Heart right ventricle (tissue), 16 donors: ENCODE measurements at regions of chr12 and their contacts with region 1.

Region 1: DNA sequence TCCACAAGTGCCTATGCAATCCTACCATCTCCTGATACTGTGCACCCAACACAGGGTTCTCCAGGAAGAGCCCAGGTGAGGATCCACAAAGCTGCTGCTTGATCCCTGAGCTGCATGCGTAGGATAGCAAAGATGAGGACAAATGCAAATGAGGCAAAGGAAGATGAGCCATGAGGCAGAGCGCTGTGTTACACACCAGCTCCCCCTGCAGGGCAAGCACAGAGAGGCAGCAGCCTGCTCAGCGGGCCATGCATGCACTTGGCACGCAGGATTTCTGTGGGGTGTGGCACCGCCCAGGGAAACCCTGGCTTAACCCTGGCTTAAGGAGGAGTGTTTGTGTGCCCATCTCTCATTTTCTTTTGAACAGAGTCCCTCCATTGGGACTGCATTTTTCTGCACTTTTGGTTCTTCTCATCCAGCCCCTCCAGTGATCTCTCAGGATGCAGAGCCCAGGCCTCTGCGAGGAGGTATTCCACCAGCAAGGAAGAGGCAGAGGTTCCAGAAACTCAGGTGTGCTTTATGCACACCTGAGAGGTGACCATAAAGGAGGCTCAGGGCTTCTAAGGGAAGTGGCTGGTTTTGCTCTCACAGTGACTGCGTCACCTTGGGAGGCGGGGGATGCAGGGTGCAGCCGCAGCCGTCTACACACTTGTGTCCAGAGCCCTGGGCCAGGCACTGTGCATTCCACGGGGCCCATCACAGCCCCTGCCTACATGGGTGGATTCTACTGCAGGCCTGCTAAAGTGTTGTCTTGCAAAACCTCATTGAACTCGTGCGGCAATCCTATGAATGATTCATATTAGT is 973.3 kb upstream of the TMEM132C start:
- DNase-seq: peak in 1 of 2 donors; percentile 40
- ATAC-seq: peak in 5 of 8 donors; percentile 16 to 69 (median 50)
- H3K4me3 ChIP-seq: no peak overlapping the region
- H3K27ac ChIP-seq: no peak overlapping the region
- H3K4me1 ChIP-seq: no peaks in the 10 kb centered on the region
- H3K27me3 ChIP-seq: peaks cover 0 to 16% (median 7%) of the 10 kb centered on the region in 7 donors
- CTCF ChIP-seq: peak; percentile 30 to 76 (median 64)

Region 2: GRCh38 chr12:127115468-127116035 is 178.2 kb before region 1 on chr12:
- intact Hi-C with region 1: loop called in 2 of 10 experiments (anchors 10 kb)
- DNase-seq: no peak
- ATAC-seq: no peak
- H3K4me3 ChIP-seq: no peak overlapping the region
- H3K27ac ChIP-seq: no peak overlapping the region
- H3K4me1 ChIP-seq: no peaks in the 10 kb centered on the region
- H3K27me3 ChIP-seq: peaks cover 0 to 5% (median 0%) of the 10 kb centered on the region in 7 donors
- CTCF ChIP-seq: no peak

Region 3: GRCh38 chr12:127334912-127335644 is 41.4 kb after region 1 on chr12:
- intact Hi-C with region 1: no loop called
- DNase-seq: no peak
- ATAC-seq: no peak
- H3K4me3 ChIP-seq: no peak overlapping the region
- H3K27ac ChIP-seq: no peak overlapping the region
- H3K4me1 ChIP-seq: no peaks in the 10 kb centered on the region
- H3K27me3 ChIP-seq: peaks cover 0 to 6% (median 3%) of the 10 kb centered on the region in 7 donors
- CTCF ChIP-seq: no peak